Tibial artery (tissue), 4 donors: ENCODE measurements at regions of chr11 and their contacts with region 1.

Region 1: GRCh38 chr11:67265633-67266423 is 445 bp upstream of the GRK2 start:
- DNase-seq: peak in 1 of 2 donors; percentile 86
- H3K4me3 ChIP-seq: peak overlapping the region; percentile 29 to 41
- H3K27ac ChIP-seq: peak overlapping the region; percentile 78 to 83
- H3K4me1 ChIP-seq: peaks cover 0 to 73% (median 67%) of the 10 kb centered on the region in 4 donors
- H3K27me3 ChIP-seq: no peaks in the 10 kb centered on the region
- CTCF ChIP-seq: peak; percentile 68 to 94

Region 2: DNA sequence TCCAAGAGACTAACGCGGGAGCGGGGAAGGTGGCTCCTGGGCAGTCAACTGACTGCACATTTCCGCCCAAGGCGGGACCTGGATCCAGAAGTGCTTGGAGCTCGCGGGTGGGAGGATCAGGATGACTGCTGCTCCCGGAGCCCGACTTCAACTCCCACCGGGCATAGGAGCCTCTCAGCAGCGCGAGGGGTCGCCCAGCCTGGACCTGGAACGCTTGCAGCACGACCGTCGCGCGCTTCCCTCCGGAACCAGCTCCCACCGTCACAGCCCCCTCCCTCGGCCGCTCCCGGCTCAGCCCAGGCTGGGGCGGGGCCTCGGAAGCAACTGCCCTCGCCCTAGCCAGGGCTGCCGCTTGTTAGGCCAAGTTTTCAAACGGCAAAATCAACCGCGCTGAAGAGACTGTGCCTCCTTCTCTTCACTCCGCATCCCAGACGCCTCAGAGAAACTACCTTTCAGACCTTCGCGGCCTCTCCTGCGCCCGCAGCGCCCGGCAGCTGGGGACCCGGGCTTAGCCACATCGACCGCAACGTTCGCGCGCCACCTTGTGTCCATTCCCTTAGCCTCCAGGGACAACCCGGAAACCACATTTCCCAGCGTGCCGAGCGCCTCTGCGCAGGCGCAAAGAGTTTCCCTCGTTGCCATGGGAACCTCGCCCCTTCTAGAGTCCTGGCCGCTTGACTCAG is 51.5 kb after region 1 on chr11:
- intact Hi-C with region 1: loop called (anchors 1 kb)
- DNase-seq: peak; percentile 94 to 97
- H3K4me3 ChIP-seq: peak overlapping the region; percentile 64 to 78
- H3K27ac ChIP-seq: peak overlapping the region; percentile 91 to 94
- H3K4me1 ChIP-seq: peaks cover 0 to 19% (median 10%) of the 10 kb centered on the region in 4 donors
- H3K27me3 ChIP-seq: no peaks in the 10 kb centered on the region
- CTCF ChIP-seq: peak; percentile 91 to 99

Region 3: GRCh38 chr11:67373925-67374618 is 108.2 kb after region 1 on chr11:
- intact Hi-C with region 1: loop called (anchors 10 kb)
- DNase-seq: peak; percentile 90 to 94
- H3K4me3 ChIP-seq: peak overlapping the region; percentile 70 to 81
- H3K27ac ChIP-seq: peak overlapping the region; percentile 92 to 93
- H3K4me1 ChIP-seq: peaks cover 6 to 46% (median 38%) of the 10 kb centered on the region in 4 donors
- H3K27me3 ChIP-seq: peaks cover 0 to 4% of the 10 kb centered on the region in 2 donors
- CTCF ChIP-seq: peak; percentile 52 to 62